MCF 10A (cell line): ENCODE measurements at regions of chr10 and their contacts with region 1.

Region 1: GRCh38 chr10:62437696-62438095 is 63.5 kb downstream of the ZNF365 start:
- DNase-seq: peak; percentile 64
- H3K4me3 Mint-ChIP-seq: no peak overlapping the region
- H3K27ac Mint-ChIP-seq: no peak overlapping the region
- H3K4me1 Mint-ChIP-seq: peaks cover 22% of the 10 kb centered on the region
- H3K27me3 Mint-ChIP-seq: no peaks in the 10 kb centered on the region
- CTCF ChIP-seq: peak; percentile 69

Region 2: GRCh38 chr10:62323751-62324150 is 113.9 kb before region 1 on chr10:
- CTCF ChIA-PET with region 1: no interaction called
- POLR2A ChIA-PET with region 1: no interaction called
- intact Hi-C with region 1: no loop called
- DNase-seq: no peak
- H3K4me3 Mint-ChIP-seq: no peak overlapping the region
- H3K27ac Mint-ChIP-seq: no peak overlapping the region
- H3K4me1 Mint-ChIP-seq: no peaks in the 10 kb centered on the region
- H3K27me3 Mint-ChIP-seq: no peaks in the 10 kb centered on the region
- CTCF ChIP-seq: no peak

Region 3: GRCh38 chr10:62384057-62384446 is 53.6 kb before region 1 on chr10:
- CTCF ChIA-PET with region 1: interaction called, 5 read pairs
- POLR2A ChIA-PET with region 1: interaction called, 6 read pairs
- intact Hi-C with region 1: loop called (anchors 5 kb)
- DNase-seq: peak; percentile 76
- H3K4me3 Mint-ChIP-seq: peak overlapping the region; percentile 30
- H3K27ac Mint-ChIP-seq: peak overlapping the region; percentile 90
- H3K4me1 Mint-ChIP-seq: peaks cover 66% of the 10 kb centered on the region
- H3K27me3 Mint-ChIP-seq: no peaks in the 10 kb centered on the region
- CTCF ChIP-seq: no peak

Region 4: GRCh38 chr10:62456611-62457101 is 19.0 kb after region 1 on chr10:
- CTCF ChIA-PET with region 1: interaction called, 27 read pairs
- POLR2A ChIA-PET with region 1: interaction called, 3 read pairs
- intact Hi-C with region 1: no loop called
- DNase-seq: no peak
- H3K4me3 Mint-ChIP-seq: no peak overlapping the region
- H3K27ac Mint-ChIP-seq: no peak overlapping the region
- H3K4me1 Mint-ChIP-seq: peaks cover 9% of the 10 kb centered on the region
- H3K27me3 Mint-ChIP-seq: no peaks in the 10 kb centered on the region
- CTCF ChIP-seq: no peak

Region 5: GRCh38 chr10:62594093-62594520 is 156.4 kb after region 1 on chr10:
- CTCF ChIA-PET with region 1: interaction called, 30 read pairs
- POLR2A ChIA-PET with region 1: no interaction called
- intact Hi-C with region 1: loop called (anchors 5 kb)
- DNase-seq: peak; percentile 64
- H3K4me3 Mint-ChIP-seq: no peak overlapping the region
- H3K27ac Mint-ChIP-seq: no peak overlapping the region
- H3K4me1 Mint-ChIP-seq: peaks cover 6% of the 10 kb centered on the region
- H3K27me3 Mint-ChIP-seq: no peaks in the 10 kb centered on the region
- CTCF ChIP-seq: peak; percentile 87

Region 6: DNA sequence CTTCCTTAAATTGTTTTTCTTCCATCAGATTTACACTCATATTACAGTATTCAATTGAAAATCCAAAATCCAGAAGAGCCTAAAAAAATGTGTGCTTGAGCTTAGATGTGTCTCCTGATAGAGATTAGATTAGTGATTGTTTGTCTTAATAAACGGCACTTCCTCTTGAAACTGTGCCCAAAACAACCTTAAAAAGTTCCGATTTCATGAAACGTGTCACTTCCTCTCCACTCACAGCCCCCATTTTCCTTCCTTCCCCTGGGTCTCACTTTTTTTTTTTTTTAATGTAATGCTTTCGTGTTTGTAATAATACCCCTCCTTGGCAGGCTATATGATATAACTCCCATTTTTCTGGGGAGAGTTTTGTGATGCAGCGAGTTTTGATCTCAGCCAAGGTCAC is 252.0 kb after region 1 on chr10:
- CTCF ChIA-PET with region 1: no interaction called
- POLR2A ChIA-PET with region 1: no interaction called
- intact Hi-C with region 1: no loop called
- DNase-seq: no peak
- H3K4me3 Mint-ChIP-seq: no peak overlapping the region
- H3K27ac Mint-ChIP-seq: no peak overlapping the region
- H3K4me1 Mint-ChIP-seq: no peaks in the 10 kb centered on the region
- H3K27me3 Mint-ChIP-seq: no peaks in the 10 kb centered on the region
- CTCF ChIP-seq: no peak

Region 7: DNA sequence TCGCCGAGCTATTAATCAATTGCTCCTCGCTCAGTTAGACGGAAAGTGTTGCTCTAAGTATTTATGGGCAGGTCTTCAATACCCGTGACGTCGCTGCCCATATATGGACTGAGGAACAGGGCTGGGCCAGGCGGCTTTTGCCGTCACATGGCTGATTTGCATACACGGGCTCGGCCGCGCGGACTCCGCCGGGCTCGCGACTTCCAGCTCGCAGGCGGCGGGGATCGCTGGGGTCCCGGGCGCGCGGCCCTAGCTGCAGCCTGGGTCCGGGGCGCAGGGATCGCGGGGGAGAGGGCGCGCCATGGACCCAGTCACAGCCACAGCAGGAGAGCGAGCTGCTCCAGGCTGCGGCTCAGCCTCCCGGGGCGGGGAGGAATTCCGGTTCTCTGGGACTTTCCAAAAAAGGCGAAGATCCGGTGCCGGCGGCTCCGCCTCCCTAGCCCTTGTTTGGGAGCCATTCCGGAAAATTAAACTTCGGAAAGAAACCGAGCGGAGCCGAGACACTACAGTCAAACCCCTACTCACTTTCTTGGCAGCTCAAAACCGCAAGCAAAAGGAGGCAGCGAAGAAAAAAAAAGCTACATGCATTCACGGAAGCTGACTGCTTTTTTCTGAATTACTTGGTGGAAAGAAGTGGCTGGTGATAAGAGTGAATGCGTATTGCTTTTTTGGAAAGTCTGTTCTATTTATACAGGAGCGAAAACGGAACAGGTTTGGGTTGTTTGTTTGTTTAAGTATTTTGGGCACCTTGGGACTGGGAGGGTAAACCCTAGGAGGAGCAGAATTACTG is 378.8 kb after region 1 on chr10 and contains the start of gene EGR2:
- CTCF ChIA-PET with region 1: interaction called, 4 read pairs
- POLR2A ChIA-PET with region 1: no interaction called
- intact Hi-C with region 1: loop called (anchors 5 kb)
- DNase-seq: peak; percentile 93
- H3K4me3 Mint-ChIP-seq: peak within 1 kb of the TSS; percentile 95
- H3K27ac Mint-ChIP-seq: peak within 1 kb of the TSS; percentile 95
- H3K4me1 Mint-ChIP-seq: peaks cover 24% of the 10 kb centered on the region
- H3K27me3 Mint-ChIP-seq: no peaks in the 10 kb centered on the region
- CTCF ChIP-seq: no peak
- total RNA-seq, gene EGR2: 0.25 and 1.0 TPM in 2 replicates